ENCODE measurements at regions of chr18 and their contacts with region 1.

Region 1: GRCh38 chr18:21489119-21489750 is 111.3 kb downstream of the ESCO1 start:
- DNase-seq: peak; percentile 72
- H3K4me3 ChIP-seq: no peak overlapping the region
- H3K27ac ChIP-seq: no peak overlapping the region
- H3K4me1 ChIP-seq: peaks cover 9% of the 10 kb centered on the region
- H3K27me3 ChIP-seq: no peaks in the 10 kb centered on the region
- CTCF ChIP-seq: peak; percentile 91

Region 2: GRCh38 chr18:21600526-21601410 is 111.5 kb after region 1 on chr18 and contains the start of gene ESCO1:
- CTCF ChIA-PET with region 1: interaction called, 6 read pairs
- POLR2A ChIA-PET with region 1: no interaction called
- intact Hi-C with region 1: loop called (anchors 5 kb)
- DNase-seq: peak; percentile 96
- H3K4me3 ChIP-seq: peak within 1 kb of the TSS; percentile 97
- H3K27ac ChIP-seq: peak within 1 kb of the TSS; percentile 93
- H3K4me1 ChIP-seq: peaks cover 21% of the 10 kb centered on the region
- H3K27me3 ChIP-seq: no peaks in the 10 kb centered on the region
- CTCF ChIP-seq: peak; percentile 96
- total RNA-seq, gene ESCO1: 14.9 and 16.5 TPM in 2 replicates

Region 3: GRCh38 chr18:21632393-21632792 is 143.2 kb after region 1 on chr18:
- CTCF ChIA-PET with region 1: no interaction called
- POLR2A ChIA-PET with region 1: no interaction called
- intact Hi-C with region 1: no loop called
- DNase-seq: no peak
- H3K4me3 ChIP-seq: no peak overlapping the region
- H3K27ac ChIP-seq: no peak overlapping the region
- H3K4me1 ChIP-seq: no peaks in the 10 kb centered on the region
- H3K27me3 ChIP-seq: no peaks in the 10 kb centered on the region
- CTCF ChIP-seq: peak; percentile 18; the same call in 1 of the 2 replicates

Region 4: DNA sequence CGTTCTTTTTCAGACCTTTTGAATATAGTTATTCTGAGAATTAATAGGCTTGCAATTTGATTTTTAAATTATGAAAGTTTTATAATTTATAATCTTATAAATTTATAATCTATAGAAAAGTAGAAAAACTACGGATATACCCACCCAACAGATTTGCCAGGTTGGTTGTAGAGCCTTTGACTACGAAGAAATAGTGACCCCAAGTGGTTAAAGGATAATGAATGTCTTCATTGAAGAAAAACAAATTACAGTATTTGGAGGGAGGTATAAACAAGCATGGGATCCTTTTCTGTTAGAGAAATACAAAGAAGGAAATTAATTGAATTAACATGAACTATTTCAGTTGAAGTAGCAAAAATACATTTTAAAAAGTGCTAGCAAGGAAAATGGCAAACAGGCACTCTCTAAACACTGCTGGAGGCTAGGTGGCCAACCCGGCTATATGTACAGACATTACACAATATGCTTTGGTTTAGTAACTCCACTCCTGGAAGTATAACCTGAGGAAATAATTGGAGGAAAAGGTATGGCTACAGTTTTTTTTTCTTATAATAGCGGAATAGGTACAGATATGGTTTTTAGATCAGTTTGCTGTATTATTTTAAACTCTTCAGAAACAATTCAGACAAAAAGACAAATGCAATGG is 362.2 kb after region 1 on chr18:
- CTCF ChIA-PET with region 1: no interaction called
- POLR2A ChIA-PET with region 1: no interaction called
- intact Hi-C with region 1: loop called (anchors 10 kb)
- DNase-seq: peak; percentile 18
- H3K4me3 ChIP-seq: no peak overlapping the region
- H3K27ac ChIP-seq: no peak overlapping the region
- H3K4me1 ChIP-seq: no peaks in the 10 kb centered on the region
- H3K27me3 ChIP-seq: no peaks in the 10 kb centered on the region
- CTCF ChIP-seq: peak; percentile 52; the same call in 1 of the 2 replicates

Region 5: GRCh38 chr18:23099621-23100020 is 1610.4 kb after region 1 on chr18:
- CTCF ChIA-PET with region 1: no interaction called
- POLR2A ChIA-PET with region 1: no interaction called
- intact Hi-C with region 1: no loop called
- DNase-seq: no peak
- H3K4me3 ChIP-seq: no peak overlapping the region
- H3K27ac ChIP-seq: no peak overlapping the region
- H3K4me1 ChIP-seq: peaks cover 9% of the 10 kb centered on the region
- H3K27me3 ChIP-seq: no peaks in the 10 kb centered on the region
- CTCF ChIP-seq: no peak